ENCODE measurements at regions of chr9 and their contacts with region 1.

Region 1: GRCh38 chr9:91422758-91423711 is 597 bp downstream of the NFIL3 start:
- DNase-seq: peak; percentile 61 to 71
- ATAC-seq: peak; percentile 35 to 55
- H3K4me3 ChIP-seq: peak overlapping the region; percentile 73
- H3K27ac ChIP-seq: peak overlapping the region; percentile 87 to 95
- H3K4me1 ChIP-seq: peaks cover 54% of the 10 kb centered on the region
- CTCF ChIP-seq: peak; percentile 18; the same call in 1 of the 3 replicates
- EP300 ChIP-seq: peak in 1 of 2 experiments; percentile 21; a peak in 1 of 5 replicates
- POLR2A ChIP-seq: no peak
- RAD21 ChIP-seq: peak in 1 of 2 experiments; percentile 23; a peak in 1 of 5 replicates

Region 2: GRCh38 chr9:91036826-91037510 is 386.1 kb before region 1 on chr9:
- CTCF ChIA-PET with region 1: interaction called, 41 read pairs
- POLR2A ChIA-PET with region 1: interaction called, 19 read pairs
- DNase-seq: peak; percentile 77 to 91
- ATAC-seq: peak; percentile 96 to 98
- H3K4me3 ChIP-seq: no peak overlapping the region
- H3K27ac ChIP-seq: peak overlapping the region; percentile 66 to 89
- H3K4me1 ChIP-seq: peaks cover 21% of the 10 kb centered on the region
- CTCF ChIP-seq: peak; percentile 75
- EP300 ChIP-seq: no peak
- POLR2A ChIP-seq: no peak
- RAD21 ChIP-seq: peak; percentile 91 to 96

Region 3: DNA sequence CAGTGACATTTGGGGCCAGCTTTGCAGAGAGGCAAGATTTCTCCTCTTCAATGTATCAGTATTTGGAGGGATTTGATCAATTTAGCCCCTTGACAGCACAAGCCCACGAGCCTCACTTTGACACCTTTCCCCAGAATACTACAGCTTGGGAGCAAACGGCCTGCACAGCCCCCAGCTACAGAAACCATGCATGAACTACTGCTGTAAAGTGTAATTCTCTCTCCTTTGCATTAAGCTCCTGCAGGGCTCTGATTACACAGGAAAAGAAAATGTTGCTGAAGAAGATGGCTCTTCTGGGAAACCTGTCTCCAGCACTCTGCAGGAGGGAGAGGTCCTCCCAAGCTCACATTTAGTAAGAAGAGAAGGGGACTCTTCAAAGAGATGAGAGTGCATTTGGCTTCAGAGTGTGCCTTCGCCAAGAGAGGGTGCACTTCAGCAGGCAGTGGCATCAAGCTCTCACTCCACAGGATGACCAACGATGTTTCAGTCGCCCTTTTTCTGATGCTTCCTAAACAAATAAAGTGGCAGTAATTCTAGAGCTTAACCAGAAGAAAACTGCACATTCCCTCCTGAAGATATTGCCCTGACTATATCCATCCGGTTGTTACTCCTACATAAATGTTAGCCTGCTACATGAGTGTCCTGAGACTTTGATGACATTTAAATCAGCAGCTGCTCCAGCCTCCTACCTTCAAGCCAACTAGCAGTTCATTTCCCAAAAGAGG is 333.5 kb before region 1 on chr9:
- CTCF ChIA-PET with region 1: interaction called, 31 read pairs
- POLR2A ChIA-PET with region 1: interaction called, 5 read pairs
- DNase-seq: peak in 1 of 2 experiments; percentile 59
- ATAC-seq: peak; percentile 89 to 91
- H3K4me3 ChIP-seq: no peak overlapping the region
- H3K27ac ChIP-seq: peak overlapping the region in 1 of 2 experiments; percentile 51; a peak in 1 of 6 replicates
- H3K4me1 ChIP-seq: 0 out of 3 replicates have a peak, but pooled peaks cover 7% of the 10 kb centered on the region
- CTCF ChIP-seq: peak; percentile 59
- EP300 ChIP-seq: no peak
- POLR2A ChIP-seq: no peak
- RAD21 ChIP-seq: peak; percentile 76 to 80

Region 4: GRCh38 chr9:91197232-91198181 is 225.5 kb before region 1 on chr9:
- CTCF ChIA-PET with region 1: interaction called, 10 read pairs
- POLR2A ChIA-PET with region 1: interaction called, 7 read pairs
- DNase-seq: peak; percentile 88 to 98
- ATAC-seq: peak; percentile 79 to 82
- H3K4me3 ChIP-seq: peak overlapping the region; percentile 17; the same call in 1 of the 3 replicates
- H3K27ac ChIP-seq: peak overlapping the region; percentile 73 to 94
- H3K4me1 ChIP-seq: peaks cover 39% of the 10 kb centered on the region
- CTCF ChIP-seq: no peak
- EP300 ChIP-seq: peak; percentile 91 to 95; a peak in 4 of 5 replicates
- POLR2A ChIP-seq: no peak
- RAD21 ChIP-seq: peak; percentile 38 to 65; a peak in 4 of 5 replicates

Region 5: GRCh38 chr9:91361291-91362050 is 61.6 kb before region 1 on chr9 and contains the start of gene AUH:
- CTCF ChIA-PET with region 1: interaction called, 9 read pairs
- POLR2A ChIA-PET with region 1: interaction called, 16 read pairs
- DNase-seq: peak; percentile 73 to 79
- ATAC-seq: peak; percentile 94 to 97
- H3K4me3 ChIP-seq: peak within 1 kb of the TSS; percentile 87
- H3K27ac ChIP-seq: peak within 1 kb of the TSS; percentile 90 to 96
- H3K4me1 ChIP-seq: peaks cover 17% of the 10 kb centered on the region
- CTCF ChIP-seq: no peak
- EP300 ChIP-seq: no peak
- POLR2A ChIP-seq: peak; percentile 54
- RAD21 ChIP-seq: peak in 1 of 2 experiments; percentile 27; a peak in 1 of 5 replicates
- polyA plus RNA-seq, gene AUH: 12.9 and 15.9 TPM in 2 replicates

Region 6: GRCh38 chr9:91433180-91433579 is 10.1 kb after region 1 on chr9:
- CTCF ChIA-PET with region 1: interaction called, 18 read pairs
- POLR2A ChIA-PET with region 1: interaction called, 12 read pairs
- DNase-seq: peak; percentile 68 to 91
- ATAC-seq: peak; percentile 99
- H3K4me3 ChIP-seq: no peak overlapping the region
- H3K27ac ChIP-seq: peak overlapping the region; percentile 26 to 33; a peak in 3 of 6 replicates
- H3K4me1 ChIP-seq: peaks cover 14% of the 10 kb centered on the region
- CTCF ChIP-seq: peak; percentile 66
- EP300 ChIP-seq: 0 out of 5 replicates have a peak, but pooled peaks of 1 of the 2 experiments have one; percentile 25
- POLR2A ChIP-seq: no peak
- RAD21 ChIP-seq: peak; percentile 80 to 85